ENCODE measurements at regions of chr22 and their contacts with region 1.

Region 1: DNA sequence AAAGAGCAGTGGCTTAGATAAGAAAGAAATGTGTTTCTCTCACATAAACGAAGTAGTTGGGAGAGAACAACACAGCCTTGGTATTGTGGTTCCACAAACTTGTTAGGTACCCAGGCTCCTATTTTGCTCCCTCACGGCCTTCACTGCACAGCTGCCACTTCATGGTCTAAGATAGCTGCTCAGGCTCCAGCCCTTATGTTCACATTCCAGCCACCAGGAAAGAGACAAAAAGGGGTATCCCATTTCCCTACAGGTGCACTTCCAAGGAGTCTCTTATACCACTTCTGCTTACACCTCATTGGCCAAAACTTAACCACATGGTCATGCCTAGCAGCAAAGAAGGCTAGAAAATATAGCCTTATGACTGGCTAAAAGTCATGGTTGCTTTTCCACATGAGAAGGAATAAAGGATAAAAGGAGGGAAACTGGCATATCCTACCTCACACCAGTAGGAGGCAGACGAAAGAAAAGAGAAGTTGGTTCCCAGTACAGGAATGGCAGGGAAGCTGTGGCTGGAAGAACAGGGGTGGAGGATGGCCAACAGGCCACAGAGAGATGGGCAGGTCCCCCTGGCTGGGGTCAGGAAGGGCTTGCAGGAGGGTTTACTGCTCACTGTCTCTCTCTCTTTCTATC is 5.4 kb upstream of the HDHD5 start:
- DNase-seq: no peak
- H3K4me3 ChIP-seq: no peak overlapping the region
- H3K27ac ChIP-seq: no peak overlapping the region
- H3K4me1 ChIP-seq: peaks cover 10% of the 10 kb centered on the region
- H3K27me3 ChIP-seq: no peaks in the 10 kb centered on the region
- CTCF ChIP-seq: no peak
- POLR2A ChIP-seq: no peak

Region 2: DNA sequence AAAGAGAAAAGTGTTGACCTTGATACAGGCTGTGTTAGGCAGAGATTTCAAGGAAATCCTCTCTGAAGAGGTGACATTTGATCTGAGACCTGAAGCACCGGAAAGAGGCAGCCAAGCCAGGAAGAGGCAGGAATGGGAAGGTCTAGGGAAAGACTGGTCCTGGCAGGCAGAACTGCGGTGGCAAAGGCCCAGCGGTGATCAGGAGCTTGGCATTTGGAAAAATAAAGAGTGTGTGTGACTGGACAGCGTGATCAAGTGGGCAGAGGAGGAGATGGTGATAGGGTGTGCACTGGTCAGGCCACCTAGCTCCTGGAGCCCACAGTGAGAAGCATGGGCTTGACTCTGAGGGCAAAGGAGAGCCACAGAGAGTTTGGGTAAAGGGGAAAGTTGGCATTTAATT is 129.3 kb before region 1 on chr22:
- intact Hi-C with region 1: no loop called
- DNase-seq: no peak
- H3K4me3 ChIP-seq: no peak overlapping the region
- H3K27ac ChIP-seq: no peak overlapping the region
- H3K4me1 ChIP-seq: no peaks in the 10 kb centered on the region
- H3K27me3 ChIP-seq: no peaks in the 10 kb centered on the region
- CTCF ChIP-seq: no peak
- POLR2A ChIP-seq: no peak

Region 3: DNA sequence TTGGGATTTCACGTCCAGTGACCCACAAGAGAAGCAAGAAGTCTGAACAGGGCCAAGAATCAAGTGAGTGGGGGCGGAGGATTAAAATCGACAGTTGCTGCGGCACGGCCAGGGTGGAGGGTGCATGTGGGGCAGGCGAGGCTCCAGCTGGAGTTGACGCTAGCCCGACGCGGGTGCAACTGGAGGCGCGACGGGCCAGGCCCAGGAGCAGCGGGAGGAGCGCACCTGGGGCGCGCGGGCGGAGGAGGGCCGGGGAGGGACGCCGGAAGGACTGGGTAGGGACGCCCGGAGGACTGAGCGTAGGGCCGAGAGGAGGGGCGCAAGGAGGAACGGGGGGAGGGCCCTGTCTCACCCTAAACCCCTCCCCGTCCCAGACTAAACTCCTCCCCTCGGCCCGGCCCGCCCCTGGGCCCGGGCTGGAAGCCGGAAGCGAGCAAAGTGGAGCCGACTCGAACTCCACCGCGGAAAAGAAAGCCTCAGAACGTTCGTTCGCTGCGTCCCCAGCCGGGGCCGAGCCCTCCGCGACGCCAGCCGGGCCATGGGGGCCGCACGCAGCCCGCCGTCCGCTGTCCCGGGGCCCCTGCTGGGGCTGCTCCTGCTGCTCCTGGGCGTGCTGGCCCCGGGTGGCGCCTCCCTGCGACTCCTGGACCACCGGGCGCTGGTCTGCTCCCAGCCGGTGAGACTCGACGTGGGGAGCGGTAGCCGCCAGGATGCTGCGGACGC is 79.8 kb before region 1 on chr22 and contains the start of gene IL17RA:
- intact Hi-C with region 1: loop called (anchors 5 kb)
- DNase-seq: peak in 1 of 2 donors; percentile 91
- H3K4me3 ChIP-seq: peak within 1 kb of the TSS; percentile 85 to 91
- H3K27ac ChIP-seq: peak within 1 kb of the TSS; percentile 65
- H3K4me1 ChIP-seq: peaks cover 27% of the 10 kb centered on the region
- H3K27me3 ChIP-seq: no peaks in the 10 kb centered on the region
- CTCF ChIP-seq: peak in 1 of 3 experiments; percentile 8
- POLR2A ChIP-seq: peak in 1 of 2 donors; percentile 77
- total RNA-seq, gene IL17RA: 13.3 TPM

Region 4: DNA sequence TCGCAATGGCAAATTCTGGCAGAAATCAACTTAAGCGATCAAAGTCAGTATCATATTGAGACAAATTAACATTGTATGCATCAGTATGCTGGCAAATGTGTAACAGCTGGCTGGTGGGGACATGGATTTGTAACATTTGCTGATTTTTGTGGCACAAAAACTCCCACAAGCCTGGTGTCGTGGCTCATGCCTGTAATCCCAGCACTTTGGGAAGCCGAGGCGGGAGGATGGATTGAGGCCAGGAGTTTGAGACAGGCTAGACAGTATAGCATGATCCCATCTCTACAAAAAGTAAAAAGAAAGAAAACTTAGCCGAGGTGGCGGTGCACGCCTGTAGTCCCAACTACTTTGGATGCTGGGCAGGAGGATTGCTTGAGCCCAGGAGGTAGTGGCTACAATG is 12.2 kb after region 1 on chr22:
- intact Hi-C with region 1: loop called (anchors 1 kb)
- DNase-seq: no peak
- H3K4me3 ChIP-seq: no peak overlapping the region
- H3K27ac ChIP-seq: no peak overlapping the region
- H3K4me1 ChIP-seq: peaks cover 9% of the 10 kb centered on the region
- H3K27me3 ChIP-seq: no peaks in the 10 kb centered on the region
- CTCF ChIP-seq: no peak
- POLR2A ChIP-seq: no peak

Measured in vagina (tissue), 2 donors.